PC-9 (cell line): ENCODE measurements at regions of chr6 and their contacts with region 1.

Region 1: GRCh38 chr6:44630125-44631028 is 242.9 kb downstream of the CDC5L start:
- DNase-seq: peak in 1 of 2 experiments; percentile 57
- H3K4me3 ChIP-seq: no peak overlapping the region
- H3K27ac ChIP-seq: no peak overlapping the region
- H3K4me1 ChIP-seq: no peaks in the 10 kb centered on the region
- H3K27me3 ChIP-seq: no peaks in the 10 kb centered on the region
- CTCF ChIP-seq: peak; percentile 74

Region 2: DNA sequence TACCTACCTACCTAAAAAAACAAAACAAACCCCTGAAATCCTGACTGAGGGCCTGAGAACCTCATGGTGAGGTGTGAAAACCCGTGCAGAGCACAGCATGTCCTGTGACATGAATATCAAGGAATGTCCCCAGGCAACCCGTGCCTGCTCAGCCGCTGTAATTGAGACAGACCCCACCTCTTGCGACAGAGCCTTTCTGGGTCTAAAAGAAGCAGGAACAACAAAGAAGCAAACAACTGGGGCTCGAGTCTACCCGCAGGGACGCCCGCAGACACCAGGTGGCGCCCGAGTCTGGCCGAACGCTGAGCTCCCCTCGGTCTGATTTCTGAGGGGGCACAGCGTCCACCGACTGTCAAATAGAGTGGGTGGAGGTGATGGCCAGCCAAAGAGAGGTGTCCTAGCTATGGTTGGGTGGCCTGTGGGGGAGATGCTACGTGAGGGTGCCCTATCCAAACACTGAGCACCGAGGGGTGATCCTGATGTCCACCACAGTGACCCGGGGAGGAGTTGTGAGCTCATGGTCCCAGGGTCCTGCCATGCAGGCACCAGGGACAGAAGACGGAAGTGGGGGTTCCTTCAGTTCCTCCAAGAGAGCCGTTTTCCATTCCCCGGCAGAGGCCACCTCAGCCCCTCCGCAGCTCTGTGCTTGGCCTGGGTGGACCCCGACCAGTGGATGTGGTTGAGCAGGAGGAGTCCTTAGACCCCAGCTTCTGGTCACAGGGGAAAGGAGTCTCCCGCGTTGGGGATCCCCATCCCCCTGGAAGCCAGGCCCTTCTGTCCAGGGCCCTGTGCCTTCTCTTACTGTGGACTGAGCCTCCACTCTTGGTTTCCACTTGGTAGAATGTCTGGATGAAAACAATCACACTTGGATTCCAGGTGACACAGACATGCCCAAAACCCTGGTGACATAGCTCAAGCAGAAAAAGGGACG is 25.3 kb after region 1 on chr6:
- CTCF ChIA-PET with region 1: interaction called, 5 read pairs
- POLR2A ChIA-PET with region 1: interaction called, 11 read pairs
- intact Hi-C with region 1: no loop called
- DNase-seq: peak; percentile 77 to 79
- H3K4me3 ChIP-seq: no peak overlapping the region
- H3K27ac ChIP-seq: peak overlapping the region; percentile 34; the same call in 1 of the 2 replicates
- H3K4me1 ChIP-seq: peaks cover 10% of the 10 kb centered on the region; the same call in 1 of the 2 replicates
- H3K27me3 ChIP-seq: no peaks in the 10 kb centered on the region
- CTCF ChIP-seq: peak; percentile 98